Sigmoid colon (tissue), 7 donors: ENCODE measurements at regions of chr15 and their contacts with region 1.

Region 1: GRCh38 chr15:65086017-65086679 is 9.6 kb downstream of the KBTBD13 start:
- DNase-seq: peak; percentile 64
- H3K4me3 ChIP-seq: no peak overlapping the region
- H3K27ac ChIP-seq: peak overlapping the region; percentile 93 to 95 (median 94)
- H3K4me1 ChIP-seq: peaks cover 0 to 91% (median 77%) of the 10 kb centered on the region in 4 donors
- H3K27me3 ChIP-seq: no peaks in the 10 kb centered on the region
- CTCF ChIP-seq: peak in 1 of 4 experiments; percentile 17
- EP300 ChIP-seq: no peak
- POLR2A ChIP-seq: no peak

Region 2: GRCh38 chr15:64702816-64703646 is 383.1 kb before region 1 on chr15:
- intact Hi-C with region 1: no loop called
- DNase-seq: peak; percentile 98
- H3K4me3 ChIP-seq: peak overlapping the region; percentile 65 to 94 (median 92)
- H3K27ac ChIP-seq: peak overlapping the region; percentile 87 to 95 (median 92)
- H3K4me1 ChIP-seq: peaks cover 0 to 58% (median 52%) of the 10 kb centered on the region in 4 donors
- H3K27me3 ChIP-seq: no peaks in the 10 kb centered on the region
- CTCF ChIP-seq: no peak
- EP300 ChIP-seq: peak in 2 of 4 donors; percentile 27 to 42
- POLR2A ChIP-seq: peak in 1 of 2 donors; percentile 36

Region 3: DNA sequence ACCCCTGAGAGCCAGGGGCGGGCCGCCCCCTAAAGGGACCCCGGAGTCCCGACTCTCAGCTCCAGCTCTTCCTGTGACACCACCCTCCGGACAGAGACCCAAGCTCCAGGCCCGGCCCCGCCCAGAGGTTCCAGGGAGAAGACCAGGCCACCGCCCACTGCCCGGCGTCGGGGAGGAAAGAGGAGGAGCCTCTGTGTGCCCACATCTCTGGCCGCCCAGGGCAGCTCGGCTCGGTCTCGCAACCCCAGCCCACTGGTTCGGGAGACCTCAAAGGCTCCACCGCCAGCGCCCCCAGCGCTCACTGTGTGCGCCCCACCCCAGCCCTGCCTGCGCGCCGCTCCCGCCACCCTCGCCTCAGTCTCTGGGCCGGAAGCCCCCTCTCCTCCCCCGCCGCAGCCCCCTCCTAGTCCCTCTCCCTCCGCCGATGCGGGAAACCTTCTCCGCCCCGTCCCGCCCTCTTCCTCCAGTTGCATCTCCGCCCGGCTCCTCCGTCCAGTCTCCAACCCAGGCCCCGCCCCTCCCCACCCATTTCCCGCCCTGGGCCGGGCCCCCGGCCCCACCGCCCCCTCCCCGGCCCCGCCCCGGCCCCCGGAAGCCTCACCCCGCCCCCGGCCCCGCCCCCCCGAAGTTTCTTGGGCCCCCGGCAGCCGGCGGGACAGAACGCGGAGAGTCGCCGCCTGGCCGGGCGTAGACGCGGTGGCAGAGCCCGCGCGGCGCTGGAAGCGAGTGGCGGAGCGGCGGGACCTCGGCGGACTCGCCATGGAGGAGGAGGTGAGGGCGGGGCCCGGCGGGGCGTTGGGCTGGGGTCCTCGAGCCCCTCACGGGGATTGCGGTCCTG is 244.7 kb before region 1 on chr15 and contains the start of gene PLEKHO2:
- intact Hi-C with region 1: no loop called
- DNase-seq: peak; percentile 99
- H3K4me3 ChIP-seq: peak within 1 kb of the TSS; percentile 79 to 99 (median 97)
- H3K27ac ChIP-seq: peak within 1 kb of the TSS; percentile 92 to 99 (median 98)
- H3K4me1 ChIP-seq: peaks cover 0 to 51% (median 44%) of the 10 kb centered on the region in 4 donors
- H3K27me3 ChIP-seq: no peaks in the 10 kb centered on the region
- CTCF ChIP-seq: peak in 1 of 4 experiments; percentile 22
- EP300 ChIP-seq: no peak
- POLR2A ChIP-seq: peak; percentile 76 to 82
- total RNA-seq, gene PLEKHO2: 20.1 to 43.4 (median 23.0) TPM

Region 4: GRCh38 chr15:64989416-64990167 is 96.6 kb before region 1 on chr15 and contains the start of gene SPG21:
- intact Hi-C with region 1: loop called (anchors 5 kb)
- DNase-seq: peak; percentile 96
- H3K4me3 ChIP-seq: peak within 1 kb of the TSS; percentile 74 to 100 (median 81)
- H3K27ac ChIP-seq: peak within 1 kb of the TSS; percentile 92 to 99 (median 96)
- H3K4me1 ChIP-seq: peaks cover 0 to 35% (median 27%) of the 10 kb centered on the region in 4 donors
- H3K27me3 ChIP-seq: no peaks in the 10 kb centered on the region
- CTCF ChIP-seq: no peak
- EP300 ChIP-seq: no peak
- POLR2A ChIP-seq: peak in 1 of 2 donors; percentile 54
- total RNA-seq, gene SPG21: 95.7 to 116 (median 103) TPM

Region 5: DNA sequence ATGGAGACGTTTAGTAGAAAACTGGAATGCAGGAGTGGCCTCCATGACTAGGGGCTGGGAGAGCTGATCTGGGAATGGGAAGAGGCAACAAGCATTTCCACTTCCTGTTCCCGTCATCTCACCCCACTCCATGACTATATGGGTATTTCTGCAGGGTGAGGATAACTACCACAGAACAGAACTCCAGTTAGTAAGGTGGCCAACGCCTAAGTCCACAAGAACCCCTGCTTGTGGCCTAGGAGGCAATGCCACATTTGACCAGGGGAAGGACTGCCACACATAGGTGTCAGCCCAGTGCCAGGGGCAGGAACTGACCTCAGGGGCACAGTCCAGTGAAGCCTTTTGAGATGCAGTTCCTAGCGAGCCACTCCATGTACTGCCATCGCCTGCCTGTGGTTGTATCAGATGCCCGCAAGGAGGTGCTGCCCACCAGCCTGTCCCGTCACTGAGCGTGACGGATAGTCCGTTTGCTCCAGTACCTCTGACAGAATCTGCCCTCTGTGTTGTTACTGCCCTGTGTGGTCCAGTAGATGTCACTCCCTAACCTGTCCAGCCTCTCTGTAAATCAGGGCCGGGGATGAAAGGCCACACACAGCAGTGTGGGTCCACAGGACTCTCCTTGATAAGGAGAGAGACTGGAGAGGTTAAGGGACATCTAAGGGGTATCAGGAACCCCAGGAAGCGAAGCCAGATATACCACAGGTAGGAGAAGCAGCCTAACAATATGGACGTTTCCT is 53.2 kb before region 1 on chr15:
- intact Hi-C with region 1: loop called (anchors 2 kb)
- DNase-seq: peak; percentile 74
- H3K4me3 ChIP-seq: no peak overlapping the region
- H3K27ac ChIP-seq: peak overlapping the region in 1 of 4 donors; percentile 15
- H3K4me1 ChIP-seq: peaks cover 0 to 23% (median 17%) of the 10 kb centered on the region in 4 donors
- H3K27me3 ChIP-seq: no peaks in the 10 kb centered on the region
- CTCF ChIP-seq: peak; percentile 54 to 68 (median 58)
- EP300 ChIP-seq: no peak
- POLR2A ChIP-seq: no peak

Region 6: DNA sequence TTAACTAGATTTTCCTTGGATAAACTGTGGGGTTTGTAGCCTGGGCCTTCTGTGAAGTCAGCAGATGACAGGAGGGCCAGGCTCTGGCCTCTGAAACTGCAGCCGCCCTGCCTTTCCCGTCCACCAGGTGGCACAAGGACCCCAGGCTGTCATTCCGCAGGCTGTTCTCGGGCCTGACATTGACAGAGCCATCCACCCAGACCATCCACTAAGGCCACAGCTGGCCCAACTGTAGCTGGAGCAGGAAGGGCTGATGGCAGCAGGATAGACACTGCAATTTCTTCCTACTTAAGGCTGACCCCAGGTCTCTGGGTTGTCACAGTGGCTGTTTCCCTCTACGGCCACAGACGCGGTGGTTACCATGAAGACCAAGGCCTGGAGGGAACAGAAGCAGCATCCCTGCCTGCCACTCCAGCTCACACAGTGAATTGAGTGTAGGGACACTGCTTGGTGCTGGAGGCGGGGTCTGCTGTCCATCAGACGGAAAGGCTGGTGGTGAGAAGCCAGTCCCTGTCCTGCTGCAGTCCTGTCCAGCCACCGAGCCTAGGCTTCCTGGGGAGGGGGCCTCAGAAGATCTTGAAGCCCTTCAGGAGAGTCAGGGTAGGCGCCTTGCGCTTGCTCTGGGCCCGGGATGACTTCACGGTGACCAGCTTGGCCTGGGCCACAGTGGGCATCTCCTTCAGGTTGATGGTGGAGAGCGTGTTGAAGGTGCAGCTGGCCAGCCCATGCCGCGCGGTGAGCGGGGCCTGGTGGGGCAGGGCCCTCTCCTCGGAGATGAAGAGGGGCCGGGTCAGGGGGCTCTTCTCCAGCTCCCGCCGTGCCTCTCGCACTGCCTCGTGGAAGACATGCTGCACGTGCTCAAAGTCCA is 31.6 kb before region 1 on chr15:
- intact Hi-C with region 1: loop called (anchors 1 kb)
- DNase-seq: peak; percentile 91
- H3K4me3 ChIP-seq: no peak overlapping the region
- H3K27ac ChIP-seq: peak overlapping the region; percentile 35 to 76 (median 66)
- H3K4me1 ChIP-seq: peaks cover 0 to 31% (median 25%) of the 10 kb centered on the region in 4 donors
- H3K27me3 ChIP-seq: no peaks in the 10 kb centered on the region
- CTCF ChIP-seq: peak; percentile 90 to 97 (median 95)
- EP300 ChIP-seq: no peak
- POLR2A ChIP-seq: no peak

Region 7: DNA sequence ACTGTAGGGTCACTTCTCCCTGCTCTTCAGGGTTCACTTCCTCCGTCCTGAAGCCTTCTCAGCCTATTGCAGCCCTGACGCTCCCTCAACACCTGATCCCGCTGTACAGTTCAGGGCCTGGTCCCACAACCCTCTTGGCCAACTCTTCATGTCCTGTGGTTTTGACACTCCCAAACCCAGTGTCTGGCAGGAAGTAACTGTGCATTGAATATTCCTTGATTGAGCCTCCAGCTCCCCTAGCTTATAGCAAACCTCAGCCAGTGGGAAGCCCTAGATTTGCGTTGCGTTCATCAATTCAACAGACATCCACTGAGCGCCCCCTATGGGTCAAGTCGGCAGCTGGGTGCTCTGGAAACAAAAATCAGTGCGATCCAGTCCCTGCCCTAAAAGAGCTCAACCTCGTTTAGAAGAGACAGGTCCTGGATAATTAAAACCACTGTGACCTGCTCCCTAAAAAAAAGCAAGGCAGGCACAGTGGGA is 15.3 kb after region 1 on chr15:
- intact Hi-C with region 1: loop called (anchors 2 kb)
- DNase-seq: peak; percentile 86
- H3K4me3 ChIP-seq: no peak overlapping the region
- H3K27ac ChIP-seq: peak overlapping the region in 1 of 4 donors; percentile 19
- H3K4me1 ChIP-seq: peaks cover 0 to 23% (median 19%) of the 10 kb centered on the region in 4 donors
- H3K27me3 ChIP-seq: no peaks in the 10 kb centered on the region
- CTCF ChIP-seq: peak; percentile 61 to 88 (median 82)
- EP300 ChIP-seq: no peak
- POLR2A ChIP-seq: no peak